Activated CD4-positive, alpha-beta memory T cell treated with anti-CD3 and anti-CD28 coated beads, Interleukin-2, amount 10 ng/mL, durations not matched to agents 7 days and 5 days (primary cell): ENCODE measurements at regions of chr11 and their contacts with region 1.

Region 1: DNA sequence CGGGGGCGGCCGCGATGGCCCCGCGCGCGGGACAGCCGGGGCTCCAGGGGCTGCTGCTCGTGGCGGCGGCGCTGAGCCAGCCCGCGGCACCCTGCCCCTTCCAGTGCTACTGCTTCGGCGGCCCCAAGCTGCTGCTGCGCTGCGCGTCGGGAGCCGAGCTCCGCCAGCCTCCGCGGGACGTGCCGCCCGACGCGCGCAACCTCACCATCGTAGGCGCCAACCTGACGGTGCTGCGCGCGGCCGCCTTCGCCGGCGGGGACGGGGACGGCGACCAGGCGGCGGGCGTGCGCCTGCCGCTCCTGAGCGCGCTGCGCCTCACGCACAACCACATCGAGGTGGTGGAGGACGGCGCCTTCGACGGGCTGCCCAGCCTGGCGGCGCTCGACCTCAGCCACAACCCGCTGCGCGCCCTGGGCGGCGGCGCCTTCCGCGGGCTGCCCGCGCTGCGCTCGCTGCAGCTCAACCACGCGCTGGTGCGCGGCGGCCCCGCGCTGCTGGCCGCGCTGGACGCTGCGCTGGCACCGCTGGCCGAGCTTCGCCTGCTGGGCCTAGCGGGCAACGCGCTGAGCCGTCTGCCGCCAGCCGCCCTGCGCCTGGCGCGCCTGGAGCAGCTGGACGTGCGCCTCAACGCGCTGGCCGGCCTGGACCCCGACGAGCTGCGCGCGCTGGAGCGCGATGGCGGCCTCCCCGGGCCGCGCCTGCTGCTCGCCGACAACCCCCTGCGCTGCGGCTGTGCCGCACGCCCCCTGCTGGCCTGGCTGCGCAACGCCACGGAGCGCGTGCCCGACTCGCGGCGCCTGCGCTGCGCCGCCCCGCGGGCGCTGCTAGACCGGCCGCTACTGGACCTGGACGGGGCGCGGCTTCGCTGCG is 697 bp downstream of the TPBGL start:
- DNase-seq: peak; percentile 89
- H3K4me3 Mint-ChIP-seq: peak overlapping the region; percentile 67
- H3K27ac Mint-ChIP-seq: no peak overlapping the region
- H3K4me1 Mint-ChIP-seq: peaks cover 10% of the 10 kb centered on the region
- H3K27me3 Mint-ChIP-seq: peaks cover 68% of the 10 kb centered on the region

Region 2: DNA sequence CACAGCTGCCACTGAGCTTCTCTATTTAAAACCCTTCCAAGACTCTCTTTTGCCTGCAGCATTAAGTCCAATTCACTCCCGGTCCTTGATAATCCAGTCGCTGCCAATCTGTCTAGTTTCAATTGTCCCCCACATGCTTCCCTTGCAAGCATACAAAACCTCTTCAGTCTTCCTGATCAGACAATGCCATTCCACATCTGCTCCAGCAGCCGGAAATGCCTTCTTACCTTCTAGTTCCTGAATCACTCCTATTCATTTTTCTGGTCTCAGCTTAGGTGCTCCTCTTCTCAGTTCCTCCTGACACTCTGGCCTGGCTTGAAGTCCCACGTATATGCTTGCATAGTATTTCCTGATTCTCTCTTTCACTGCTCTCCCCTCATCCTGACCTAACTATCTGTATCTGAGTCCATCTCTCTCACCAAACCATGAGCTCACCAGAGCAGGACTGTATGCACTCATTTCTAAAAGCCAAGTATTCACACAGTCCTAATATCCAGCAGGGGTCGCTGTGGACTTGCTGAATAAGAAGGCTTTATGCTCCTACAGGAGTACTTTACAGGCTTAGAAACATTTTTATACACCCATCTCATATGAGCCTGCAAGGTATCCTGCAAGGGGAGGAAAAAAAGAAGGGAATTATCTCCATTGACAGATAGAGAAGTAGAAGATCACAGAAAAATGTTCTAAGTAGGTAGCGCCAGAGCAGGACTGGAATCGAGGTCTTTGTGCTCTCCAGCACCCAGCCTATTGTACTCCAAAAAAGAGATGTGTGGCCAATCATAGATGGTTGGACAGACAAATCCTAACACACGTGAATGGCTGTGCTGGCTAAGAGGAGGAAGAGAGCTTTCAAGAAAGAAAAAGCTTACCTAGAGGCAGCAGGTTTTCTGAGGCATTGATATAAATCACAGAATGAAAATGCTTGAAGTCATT is 311.6 kb before region 1 on chr11:
- CTCF ChIA-PET with region 1: interaction called, 20 read pairs
- POLR2A ChIA-PET with region 1: no interaction called
- DNase-seq: peak; percentile 76
- H3K4me3 Mint-ChIP-seq: no peak overlapping the region
- H3K27ac Mint-ChIP-seq: no peak overlapping the region
- H3K4me1 Mint-ChIP-seq: peaks cover 53% of the 10 kb centered on the region
- H3K27me3 Mint-ChIP-seq: no peaks in the 10 kb centered on the region

Region 3: GRCh38 chr11:75022759-75023396 is 218.4 kb before region 1 on chr11:
- CTCF ChIA-PET with region 1: interaction called, 18 read pairs
- POLR2A ChIA-PET with region 1: no interaction called
- DNase-seq: peak; percentile 79
- H3K4me3 Mint-ChIP-seq: no peak overlapping the region
- H3K27ac Mint-ChIP-seq: no peak overlapping the region
- H3K4me1 Mint-ChIP-seq: no peaks in the 10 kb centered on the region
- H3K27me3 Mint-ChIP-seq: no peaks in the 10 kb centered on the region

Region 4: DNA sequence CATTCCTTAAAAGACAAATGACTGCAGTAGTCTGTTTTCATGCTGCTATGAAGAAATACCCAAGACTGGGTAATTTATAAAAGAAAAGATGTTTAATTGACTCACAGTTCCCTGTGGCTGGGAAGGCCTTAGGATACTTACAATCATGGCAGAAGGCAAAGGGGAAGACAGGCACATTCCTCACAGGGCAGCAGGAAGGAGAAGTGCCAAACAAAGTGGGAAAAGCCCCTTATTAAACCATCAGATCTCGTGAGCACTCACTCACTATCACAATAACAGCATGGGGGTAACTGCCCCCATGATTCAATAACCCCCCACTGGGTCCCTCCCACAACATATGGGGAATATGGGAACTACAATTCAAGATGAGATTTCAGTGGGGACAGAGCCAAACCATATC is 128.2 kb before region 1 on chr11:
- CTCF ChIA-PET with region 1: no interaction called
- POLR2A ChIA-PET with region 1: no interaction called
- DNase-seq: no peak
- H3K4me3 Mint-ChIP-seq: no peak overlapping the region
- H3K27ac Mint-ChIP-seq: no peak overlapping the region
- H3K4me1 Mint-ChIP-seq: no peaks in the 10 kb centered on the region
- H3K27me3 Mint-ChIP-seq: peaks cover 23% of the 10 kb centered on the region

Region 5: DNA sequence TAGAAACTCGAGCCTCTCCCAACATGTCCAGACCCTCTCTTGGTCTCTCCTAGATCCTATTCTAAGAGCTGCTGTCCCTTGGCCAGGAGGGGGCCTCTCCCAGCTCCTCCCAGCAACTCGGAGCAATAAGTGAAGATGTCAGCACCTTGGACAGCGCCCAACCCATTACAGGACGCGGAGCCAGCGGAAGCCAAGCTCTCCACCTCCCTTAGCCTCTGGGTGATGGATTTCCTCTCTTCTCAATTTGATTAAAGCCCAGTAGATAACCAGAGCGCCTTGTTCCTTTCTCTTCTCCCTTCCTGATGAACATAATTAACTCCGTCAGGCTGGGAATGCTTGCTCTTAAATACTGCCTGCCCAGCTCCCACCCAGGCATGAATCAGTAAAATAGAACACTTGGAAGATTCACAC is 26.9 kb before region 1 on chr11:
- CTCF ChIA-PET with region 1: interaction called, 23 read pairs
- POLR2A ChIA-PET with region 1: interaction called, 3 read pairs
- DNase-seq: peak; percentile 86
- H3K4me3 Mint-ChIP-seq: no peak overlapping the region
- H3K27ac Mint-ChIP-seq: no peak overlapping the region
- H3K4me1 Mint-ChIP-seq: peaks cover 4% of the 10 kb centered on the region
- H3K27me3 Mint-ChIP-seq: peaks cover 33% of the 10 kb centered on the region

Region 6: DNA sequence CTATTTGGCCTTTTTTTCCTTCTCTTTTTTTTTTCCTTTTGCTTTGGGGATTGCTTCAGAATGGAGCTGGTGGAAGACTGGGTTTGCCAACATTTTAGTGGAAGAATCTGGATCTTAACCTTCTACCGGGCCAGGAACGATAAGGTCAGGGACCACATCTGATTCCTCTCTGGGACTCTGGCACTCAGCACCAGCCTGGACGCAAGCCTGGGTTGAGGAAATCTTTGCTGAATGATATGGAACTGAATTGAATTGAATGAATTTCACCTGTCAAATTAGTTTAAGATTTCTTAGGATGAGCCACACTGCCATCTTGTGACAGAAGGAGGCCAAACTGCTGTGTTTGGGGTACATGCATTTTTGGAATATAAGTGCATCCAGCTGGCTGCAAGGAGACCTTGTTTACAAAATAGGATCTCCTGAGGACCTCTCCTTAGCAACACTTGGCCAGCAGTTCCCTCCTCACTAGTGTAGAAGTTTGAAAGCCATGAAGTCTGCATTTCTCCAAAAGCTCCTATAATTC is 29.7 kb after region 1 on chr11:
- CTCF ChIA-PET with region 1: interaction called, 22 read pairs
- POLR2A ChIA-PET with region 1: interaction called, 13 read pairs
- DNase-seq: peak; percentile 41
- H3K4me3 Mint-ChIP-seq: no peak overlapping the region
- H3K27ac Mint-ChIP-seq: no peak overlapping the region
- H3K4me1 Mint-ChIP-seq: peaks cover 23% of the 10 kb centered on the region
- H3K27me3 Mint-ChIP-seq: no peaks in the 10 kb centered on the region